H1 (cell line): ENCODE measurements at regions of chr7 and their contacts with region 1.

Region 1: GRCh38 chr7:127708788-127709187 is 56.8 kb downstream of the SND1 start:
- DNase-seq: peak in 1 of 2 experiments; percentile 79
- H3K4me3 ChIP-seq: no peak overlapping the region
- H3K27ac ChIP-seq: no peak overlapping the region
- H3K4me1 ChIP-seq: no peaks in the 10 kb centered on the region
- H3K27me3 ChIP-seq: no peaks in the 10 kb centered on the region
- CTCF ChIP-seq: peak in 2 of 3 experiments; percentile 74 to 81; a peak in 3 of 4 replicates
- EP300 ChIP-seq: no peak
- POLR2A ChIP-seq: no peak
- RAD21 ChIP-seq: peak; percentile 91 to 94

Region 2: DNA sequence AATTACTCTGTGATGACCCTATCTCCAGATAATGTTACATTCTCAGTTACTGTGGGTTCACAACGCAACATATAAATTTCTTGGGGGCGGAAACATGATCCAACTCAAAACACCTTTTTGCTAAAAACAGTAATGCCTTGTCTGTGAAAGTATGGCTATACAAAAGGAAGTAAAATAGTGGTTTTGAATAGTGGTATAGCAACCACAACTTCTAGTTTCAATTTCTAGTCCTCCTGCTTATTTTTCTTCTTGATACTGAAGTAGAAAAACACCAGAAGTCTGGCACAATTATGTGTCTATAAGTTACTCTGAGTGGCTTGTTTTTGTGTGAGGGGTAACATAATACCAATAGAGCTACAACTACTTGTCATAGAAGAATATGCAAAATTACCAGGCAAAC is 294.8 kb before region 1 on chr7:
- CTCF ChIA-PET with region 1: no interaction called
- POLR2A ChIA-PET with region 1: no interaction called
- DNase-seq: no peak
- H3K4me3 ChIP-seq: no peak overlapping the region
- H3K27ac ChIP-seq: no peak overlapping the region
- H3K4me1 ChIP-seq: no peaks in the 10 kb centered on the region
- H3K27me3 ChIP-seq: no peaks in the 10 kb centered on the region
- CTCF ChIP-seq: no peak
- EP300 ChIP-seq: no peak
- POLR2A ChIP-seq: no peak
- RAD21 ChIP-seq: no peak

Region 3: DNA sequence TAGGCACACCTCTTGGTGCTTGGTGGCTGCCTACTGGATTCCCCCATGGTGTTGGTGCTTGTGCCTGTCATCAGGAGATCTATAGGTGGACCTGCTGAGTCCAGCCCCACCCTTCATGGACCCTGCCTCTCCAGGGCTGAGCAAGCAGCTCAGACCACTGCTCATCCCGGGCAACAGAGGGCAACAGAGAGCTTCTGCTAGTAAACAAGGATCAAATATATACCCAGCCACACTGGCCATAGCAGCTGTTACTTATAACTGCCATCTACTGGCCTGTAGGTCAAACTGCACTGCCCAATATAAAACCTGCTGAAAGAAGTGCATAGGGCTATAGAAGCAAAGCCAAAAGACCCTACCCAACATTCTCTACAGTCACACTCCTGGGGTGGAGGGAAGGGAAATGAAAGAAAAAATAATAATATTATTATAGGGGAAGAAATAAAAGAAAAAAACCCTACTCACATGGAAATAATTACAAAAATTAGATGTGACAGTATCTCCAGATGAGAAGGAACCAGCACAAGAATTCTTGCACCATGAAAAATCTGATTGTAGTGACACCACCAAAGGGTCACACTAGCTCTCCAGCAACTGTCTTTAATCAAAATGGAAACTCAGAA is 261.4 kb before region 1 on chr7:
- CTCF ChIA-PET with region 1: no interaction called
- POLR2A ChIA-PET with region 1: no interaction called
- DNase-seq: peak; percentile 64 to 67
- H3K4me3 ChIP-seq: no peak overlapping the region
- H3K27ac ChIP-seq: no peak overlapping the region
- H3K4me1 ChIP-seq: no peaks in the 10 kb centered on the region
- H3K27me3 ChIP-seq: no peaks in the 10 kb centered on the region
- CTCF ChIP-seq: peak; percentile 66 to 99 (median 91)
- EP300 ChIP-seq: no peak
- POLR2A ChIP-seq: no peak
- RAD21 ChIP-seq: peak; percentile 76 to 79

Region 4: GRCh38 chr7:127692200-127692599 is 16.6 kb before region 1 on chr7:
- CTCF ChIA-PET with region 1: interaction called, 24 read pairs
- POLR2A ChIA-PET with region 1: interaction called, 3 read pairs
- DNase-seq: no peak
- H3K4me3 ChIP-seq: no peak overlapping the region
- H3K27ac ChIP-seq: no peak overlapping the region
- H3K4me1 ChIP-seq: no peaks in the 10 kb centered on the region; a peak in 1 of 7 replicates
- H3K27me3 ChIP-seq: peaks cover 0 to 1% (median 0%) of the 10 kb centered on the region in 4 experiments; a peak in 1 of 7 replicates
- CTCF ChIP-seq: no peak
- EP300 ChIP-seq: no peak
- POLR2A ChIP-seq: no peak
- RAD21 ChIP-seq: no peak

Region 5: GRCh38 chr7:127726476-127726875 is 17.7 kb after region 1 on chr7:
- CTCF ChIA-PET with region 1: interaction called, 30 read pairs
- POLR2A ChIA-PET with region 1: interaction called, 3 read pairs
- DNase-seq: no peak
- H3K4me3 ChIP-seq: no peak overlapping the region
- H3K27ac ChIP-seq: no peak overlapping the region
- H3K4me1 ChIP-seq: peaks cover 5 to 26% (median 14%) of the 10 kb centered on the region in 4 experiments
- H3K27me3 ChIP-seq: peaks cover 0 to 3% (median 1%) of the 10 kb centered on the region in 4 experiments; a peak in 1 of 7 replicates
- CTCF ChIP-seq: no peak
- EP300 ChIP-seq: no peak
- POLR2A ChIP-seq: no peak
- RAD21 ChIP-seq: no peak

Region 6: GRCh38 chr7:127733986-127734385 is 25.2 kb after region 1 on chr7:
- CTCF ChIA-PET with region 1: interaction called, 30 read pairs
- POLR2A ChIA-PET with region 1: no interaction called
- DNase-seq: no peak
- H3K4me3 ChIP-seq: no peak overlapping the region
- H3K27ac ChIP-seq: no peak overlapping the region
- H3K4me1 ChIP-seq: peaks cover 1 to 12% (median 9%) of the 10 kb centered on the region in 4 experiments; a peak in 6 of 7 replicates
- H3K27me3 ChIP-seq: no peaks in the 10 kb centered on the region
- CTCF ChIP-seq: no peak
- EP300 ChIP-seq: no peak
- POLR2A ChIP-seq: no peak
- RAD21 ChIP-seq: no peak